Caco-2 (cell line): ENCODE measurements at regions of chr14 and their contacts with region 1.

Region 1: GRCh38 chr14:24984846-24985589 is 64.9 kb downstream of the STXBP6 start:
- DNase-seq: peak; percentile 39 to 49
- H3K4me3 ChIP-seq: no peak overlapping the region
- H3K4me3 Mint-ChIP-seq: peak overlapping the region; percentile 24
- H3K27ac Mint-ChIP-seq: peak overlapping the region; percentile 88
- H3K4me1 ChIP-seq: peaks cover 71% of the 10 kb centered on the region
- H3K4me1 Mint-ChIP-seq: peaks cover 40% of the 10 kb centered on the region
- H3K27me3 ChIP-seq: no peaks in the 10 kb centered on the region
- H3K27me3 Mint-ChIP-seq: no peaks in the 10 kb centered on the region
- CTCF ChIP-seq: no peak

Region 2: DNA sequence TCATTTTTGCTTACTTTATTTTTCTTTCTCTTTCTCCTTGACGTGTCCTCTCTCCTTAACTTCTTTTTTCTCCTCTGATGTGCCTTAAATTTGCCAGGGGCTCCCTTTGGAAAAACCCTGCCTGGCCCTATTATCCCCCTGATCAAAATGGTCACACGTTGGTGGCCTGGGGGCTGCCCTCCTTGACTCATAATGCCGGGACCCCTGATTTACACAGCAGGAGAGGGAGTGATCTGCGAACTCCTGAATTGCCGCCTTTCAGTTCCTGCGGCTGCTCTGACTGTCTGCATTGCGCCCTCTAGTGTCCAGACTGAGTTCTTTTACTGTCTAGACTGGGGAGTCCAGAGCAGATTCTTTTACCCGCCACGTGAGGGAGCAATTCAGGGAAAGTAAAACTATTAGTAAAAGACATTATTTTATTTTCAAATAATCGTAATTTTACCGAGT is 306.2 kb before region 1 on chr14:
- CTCF ChIA-PET with region 1: no interaction called
- POLR2A ChIA-PET with region 1: no interaction called
- intact Hi-C with region 1: no loop called
- DNase-seq: peak; percentile 80 to 81
- H3K4me3 ChIP-seq: no peak overlapping the region
- H3K4me3 Mint-ChIP-seq: peak overlapping the region; percentile 48
- H3K27ac Mint-ChIP-seq: no peak overlapping the region
- H3K4me1 ChIP-seq: no peaks in the 10 kb centered on the region
- H3K4me1 Mint-ChIP-seq: peaks cover 5% of the 10 kb centered on the region
- H3K27me3 ChIP-seq: no peaks in the 10 kb centered on the region
- H3K27me3 Mint-ChIP-seq: peaks cover 25% of the 10 kb centered on the region
- CTCF ChIP-seq: peak; percentile 87 to 98

Region 3: DNA sequence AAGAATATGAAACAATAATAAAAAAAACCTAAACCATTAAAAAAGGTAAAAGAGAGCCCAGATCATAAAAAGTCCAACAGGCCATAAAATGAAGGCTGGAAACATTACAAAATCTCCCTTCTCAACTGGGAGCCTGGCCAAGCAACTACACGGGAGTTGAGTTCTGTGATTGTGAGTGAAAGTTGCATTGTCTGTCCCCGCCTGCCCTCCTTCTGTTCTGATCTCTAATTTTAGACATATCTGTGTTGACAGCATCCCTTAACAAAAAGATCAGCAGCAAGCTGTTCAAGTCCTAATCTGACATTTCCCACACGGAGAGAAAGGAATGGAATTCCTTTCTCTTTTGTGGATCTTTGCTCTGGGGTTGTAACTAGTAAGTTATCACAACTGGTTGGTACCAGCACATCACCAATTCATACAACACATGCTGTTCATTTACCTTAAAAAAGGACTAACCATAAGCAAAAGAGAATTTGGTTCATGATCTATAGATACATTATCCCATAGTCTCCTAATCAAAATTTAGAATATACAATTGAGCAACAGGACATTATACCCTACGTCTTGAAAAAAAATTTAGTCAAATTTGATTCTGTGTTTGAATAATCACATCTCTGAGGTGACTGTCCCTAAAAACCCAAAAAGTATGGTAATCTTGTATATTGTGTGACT is 145.9 kb before region 1 on chr14:
- CTCF ChIA-PET with region 1: no interaction called
- POLR2A ChIA-PET with region 1: no interaction called
- intact Hi-C with region 1: loop called (anchors 1 kb)
- DNase-seq: peak in 1 of 2 experiments; percentile 36
- H3K4me3 ChIP-seq: no peak overlapping the region
- H3K4me3 Mint-ChIP-seq: peak overlapping the region; percentile 49
- H3K27ac Mint-ChIP-seq: peak overlapping the region; percentile 82
- H3K4me1 ChIP-seq: peaks cover 61% of the 10 kb centered on the region
- H3K4me1 Mint-ChIP-seq: peaks cover 36% of the 10 kb centered on the region
- H3K27me3 ChIP-seq: no peaks in the 10 kb centered on the region
- H3K27me3 Mint-ChIP-seq: no peaks in the 10 kb centered on the region
- CTCF ChIP-seq: no peak

Region 4: GRCh38 chr14:24965934-24966578 is 19.0 kb before region 1 on chr14:
- CTCF ChIA-PET with region 1: no interaction called
- POLR2A ChIA-PET with region 1: no interaction called
- intact Hi-C with region 1: loop called (anchors 2 kb)
- DNase-seq: peak; percentile 62
- H3K4me3 ChIP-seq: no peak overlapping the region
- H3K4me3 Mint-ChIP-seq: peak overlapping the region; percentile 40
- H3K27ac Mint-ChIP-seq: peak overlapping the region; percentile 90
- H3K4me1 ChIP-seq: peaks cover 50% of the 10 kb centered on the region
- H3K4me1 Mint-ChIP-seq: peaks cover 31% of the 10 kb centered on the region
- H3K27me3 ChIP-seq: no peaks in the 10 kb centered on the region
- H3K27me3 Mint-ChIP-seq: no peaks in the 10 kb centered on the region
- CTCF ChIP-seq: no peak

Region 5: DNA sequence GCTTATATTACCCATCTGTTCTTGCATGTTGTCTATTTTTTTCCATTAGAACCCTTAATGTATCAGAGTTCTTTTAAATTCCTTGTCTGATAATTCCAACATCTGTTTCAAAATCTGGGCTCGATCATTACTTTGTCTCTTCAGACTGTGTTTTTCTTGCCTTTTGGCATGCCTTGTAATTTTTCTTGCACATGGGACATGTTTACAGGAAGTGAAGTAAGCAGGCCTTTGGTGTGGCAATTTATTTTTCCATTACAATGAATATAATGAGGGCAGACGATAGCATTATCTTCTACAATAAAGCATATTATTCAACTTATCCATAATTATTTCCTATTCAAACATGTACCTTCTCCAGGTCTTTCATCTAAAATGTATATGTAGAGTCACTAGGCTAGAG is 16.6 kb after region 1 on chr14:
- CTCF ChIA-PET with region 1: no interaction called
- POLR2A ChIA-PET with region 1: interaction called, 10 read pairs
- intact Hi-C with region 1: loop called (anchors 2 kb)
- DNase-seq: no peak
- H3K4me3 ChIP-seq: no peak overlapping the region
- H3K4me3 Mint-ChIP-seq: no peak overlapping the region
- H3K27ac Mint-ChIP-seq: peak overlapping the region; percentile 62
- H3K4me1 ChIP-seq: peaks cover 52% of the 10 kb centered on the region
- H3K4me1 Mint-ChIP-seq: peaks cover 37% of the 10 kb centered on the region
- H3K27me3 ChIP-seq: no peaks in the 10 kb centered on the region
- H3K27me3 Mint-ChIP-seq: no peaks in the 10 kb centered on the region
- CTCF ChIP-seq: no peak